H1 (cell line): ENCODE measurements at regions of chr11 and their contacts with region 1.

Region 1: GRCh38 chr11:59668950-59669610 is at the start of gene PATL1:
- DNase-seq: peak; percentile 92 to 96
- H3K4me3 ChIP-seq: peak within 1 kb of the TSS; percentile 72 to 83 (median 79)
- H3K27ac ChIP-seq: peak within 1 kb of the TSS; percentile 88
- H3K4me1 ChIP-seq: peaks cover 0 to 8% (median 3%) of the 10 kb centered on the region in 4 experiments; a peak in 2 of 7 replicates
- H3K27me3 ChIP-seq: no peaks in the 10 kb centered on the region
- CTCF ChIP-seq: no peak
- EP300 ChIP-seq: peak in 1 of 2 experiments; percentile 31; a peak in 1 of 3 replicates
- POLR2A ChIP-seq: peak in 1 of 2 experiments; percentile 76; a peak in 2 of 3 replicates
- RAD21 ChIP-seq: no peak
- total RNA-seq, gene PATL1: 33.4 and 33.9 TPM in 2 replicates

Region 2: DNA sequence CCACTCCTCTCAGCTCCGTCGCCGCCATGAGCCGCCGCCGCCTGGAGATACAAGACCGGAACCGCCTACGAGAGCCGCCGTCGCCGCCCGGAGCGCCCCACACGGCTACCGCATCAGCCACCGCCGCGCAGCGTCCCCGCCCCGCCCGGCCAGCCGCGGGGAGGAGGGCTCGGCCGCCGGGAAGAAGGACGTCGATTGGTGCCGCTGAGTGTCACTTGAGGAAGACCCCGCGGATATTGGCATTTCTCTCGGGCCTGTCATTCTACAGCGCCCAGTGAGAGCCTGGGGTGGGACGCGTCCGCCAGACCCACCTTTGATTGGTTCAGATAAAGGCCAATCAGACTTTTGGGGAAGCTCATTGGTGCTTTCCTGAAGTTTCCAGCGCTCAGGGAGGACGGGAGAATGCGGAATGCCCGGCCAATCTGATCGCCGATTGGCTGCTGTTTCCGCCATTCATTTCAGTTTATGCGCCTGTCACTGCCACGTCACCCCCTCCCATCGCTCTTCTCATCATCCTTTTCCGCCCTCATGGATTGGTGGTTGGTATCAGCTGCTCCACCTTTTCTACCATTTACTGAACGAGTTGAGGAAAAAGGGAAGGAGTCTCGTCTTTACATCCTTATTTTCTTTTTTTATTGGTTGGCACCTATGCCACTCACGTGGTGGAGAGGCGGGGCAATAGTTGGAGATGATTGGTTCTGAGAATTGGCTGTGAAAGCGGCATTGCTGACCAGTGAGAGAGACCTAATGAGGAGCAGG is 53.3 kb before region 1 on chr11 and contains the start of gene OSBP:
- CTCF ChIA-PET with region 1: interaction called, 3 read pairs
- POLR2A ChIA-PET with region 1: interaction called, 16 read pairs
- DNase-seq: peak; percentile 95 to 100
- H3K4me3 ChIP-seq: peak within 1 kb of the TSS; percentile 61 to 84 (median 80)
- H3K27ac ChIP-seq: peak within 1 kb of the TSS; percentile 61; the same call in 1 of the 2 replicates
- H3K4me1 ChIP-seq: peaks cover 0 to 4% (median 0%) of the 10 kb centered on the region in 4 experiments; a peak in 2 of 7 replicates
- H3K27me3 ChIP-seq: no peaks in the 10 kb centered on the region; a peak in 1 of 7 replicates
- CTCF ChIP-seq: no peak
- EP300 ChIP-seq: no peak
- POLR2A ChIP-seq: 0 out of 3 replicates have a peak, but pooled peaks of 1 of the 2 experiments have one; percentile 36
- RAD21 ChIP-seq: no peak
- total RNA-seq, gene OSBP: 41.2 and 43.1 TPM in 2 replicates

Region 3: GRCh38 chr11:59644528-59644927 is 24.6 kb before region 1 on chr11:
- CTCF ChIA-PET with region 1: no interaction called
- POLR2A ChIA-PET with region 1: no interaction called
- DNase-seq: no peak
- H3K4me3 ChIP-seq: no peak overlapping the region
- H3K27ac ChIP-seq: no peak overlapping the region
- H3K4me1 ChIP-seq: no peaks in the 10 kb centered on the region
- H3K27me3 ChIP-seq: no peaks in the 10 kb centered on the region
- CTCF ChIP-seq: no peak
- EP300 ChIP-seq: no peak
- POLR2A ChIP-seq: no peak
- RAD21 ChIP-seq: no peak

Region 4: DNA sequence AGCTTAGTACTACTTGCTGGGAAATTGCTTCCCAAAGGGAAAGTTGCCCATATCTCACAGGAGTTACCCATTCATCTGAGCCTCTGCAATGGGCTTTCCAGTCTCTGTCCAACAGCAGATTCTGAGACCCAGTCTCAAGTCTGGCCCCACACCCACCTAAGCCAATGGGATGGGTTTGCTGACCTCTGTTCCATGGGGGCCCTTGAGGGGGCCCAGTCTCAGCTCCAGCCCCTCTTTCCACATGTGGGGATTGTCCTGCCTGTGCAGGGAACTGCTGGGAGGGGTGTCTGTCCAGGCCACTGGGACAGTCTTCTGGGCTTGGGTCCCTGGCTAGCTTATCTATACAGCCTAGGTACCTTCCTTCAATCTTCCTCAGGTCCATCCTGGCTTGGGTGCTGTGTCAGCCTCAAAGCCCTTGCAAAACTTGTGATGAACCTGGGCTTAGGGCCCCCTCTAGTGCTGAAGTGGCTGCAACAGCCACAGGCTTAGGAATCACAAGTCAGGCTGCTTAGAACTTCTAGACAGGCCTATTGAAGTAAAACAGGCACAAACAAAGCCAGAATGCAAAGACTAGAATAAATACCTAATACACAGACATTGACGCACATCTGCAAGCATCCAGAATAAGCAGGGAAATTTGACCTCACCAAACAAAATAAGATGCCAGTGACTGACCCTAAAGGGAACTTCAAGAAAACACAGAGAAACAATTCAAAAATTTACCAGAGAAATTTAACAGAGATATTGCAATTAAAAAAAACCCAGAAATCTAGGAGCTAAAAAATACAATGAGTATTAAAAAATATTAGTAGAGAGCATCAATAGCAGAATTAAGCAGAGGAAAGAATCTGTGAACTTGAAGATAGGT is 11.4 kb after region 1 on chr11:
- CTCF ChIA-PET with region 1: interaction called, 11 read pairs
- POLR2A ChIA-PET with region 1: no interaction called
- DNase-seq: peak; percentile 59 to 67
- H3K4me3 ChIP-seq: no peak overlapping the region
- H3K27ac ChIP-seq: no peak overlapping the region
- H3K4me1 ChIP-seq: 0 out of 7 replicates have a peak, but pooled peaks cover 0 to 3% (median 0%) of the 10 kb centered on the region in 4 experiments
- H3K27me3 ChIP-seq: no peaks in the 10 kb centered on the region
- CTCF ChIP-seq: peak; percentile 58 to 89 (median 74)
- EP300 ChIP-seq: no peak
- POLR2A ChIP-seq: no peak
- RAD21 ChIP-seq: peak; percentile 93 to 94